BJ (cell line): ENCODE measurements at regions of chr9 and their contacts with region 1.

Region 1: DNA sequence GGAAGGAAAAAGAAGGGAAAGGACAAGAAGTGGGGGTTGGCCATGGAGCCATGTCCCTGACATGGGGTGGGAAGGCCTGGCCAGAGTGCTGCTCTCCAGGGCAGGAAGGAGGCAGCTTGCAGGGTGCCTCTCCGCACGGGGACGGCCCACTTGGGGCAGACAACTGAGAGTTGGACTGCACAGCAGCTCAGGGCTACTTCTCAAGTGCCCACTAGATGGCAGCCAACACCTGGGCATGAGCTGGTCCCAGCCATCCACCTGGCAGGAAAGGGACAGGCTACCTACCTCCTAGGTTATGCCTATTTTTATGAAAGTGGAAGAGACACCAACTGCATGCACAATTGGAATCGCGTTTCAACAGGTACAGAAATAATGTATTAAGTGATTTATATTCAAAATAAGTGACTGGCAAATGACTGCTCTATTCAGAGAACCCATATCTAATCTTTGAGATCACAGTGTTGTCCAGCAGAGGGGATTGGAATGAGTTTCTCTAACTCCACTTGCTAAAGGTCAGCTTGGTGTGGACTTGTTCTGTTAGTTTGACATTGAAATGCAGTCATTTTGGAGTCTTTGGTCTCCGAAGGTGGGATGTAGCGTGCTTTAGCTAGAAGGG is 113.4 kb downstream of the SYK start:
- DNase-seq: no peak
- H3K4me3 ChIP-seq: no peak overlapping the region
- H3K27me3 ChIP-seq: no peaks in the 10 kb centered on the region
- CTCF ChIP-seq: peak; percentile 84

Region 2: GRCh38 chr9:89929673-89930480 is 985.1 kb before region 1 on chr9:
- CTCF ChIA-PET with region 1: no interaction called
- POLR2A ChIA-PET with region 1: no interaction called
- DNase-seq: no peak
- H3K4me3 ChIP-seq: no peak overlapping the region
- H3K27me3 ChIP-seq: no peaks in the 10 kb centered on the region; the same call in 1 of the 2 replicates
- CTCF ChIP-seq: no peak

Region 3: GRCh38 chr9:90735952-90736351 is 179.0 kb before region 1 on chr9:
- CTCF ChIA-PET with region 1: no interaction called
- POLR2A ChIA-PET with region 1: no interaction called
- DNase-seq: no peak
- H3K4me3 ChIP-seq: no peak overlapping the region
- H3K27me3 ChIP-seq: no peaks in the 10 kb centered on the region
- CTCF ChIP-seq: no peak

Region 4: GRCh38 chr9:91036826-91037510 is 122.0 kb after region 1 on chr9:
- CTCF ChIA-PET with region 1: interaction called, 11 read pairs
- POLR2A ChIA-PET with region 1: no interaction called
- DNase-seq: no peak
- H3K4me3 ChIP-seq: no peak overlapping the region
- H3K27me3 ChIP-seq: no peaks in the 10 kb centered on the region
- CTCF ChIP-seq: peak; percentile 76

Region 5: GRCh38 chr9:91720751-91721705 is 806.1 kb after region 1 on chr9:
- CTCF ChIA-PET with region 1: interaction called, 51 read pairs
- POLR2A ChIA-PET with region 1: no interaction called
- DNase-seq: no peak
- H3K4me3 ChIP-seq: no peak overlapping the region
- H3K27me3 ChIP-seq: 0 out of 2 replicates have a peak, but pooled peaks cover 3% of the 10 kb centered on the region
- CTCF ChIP-seq: no peak

Region 6: DNA sequence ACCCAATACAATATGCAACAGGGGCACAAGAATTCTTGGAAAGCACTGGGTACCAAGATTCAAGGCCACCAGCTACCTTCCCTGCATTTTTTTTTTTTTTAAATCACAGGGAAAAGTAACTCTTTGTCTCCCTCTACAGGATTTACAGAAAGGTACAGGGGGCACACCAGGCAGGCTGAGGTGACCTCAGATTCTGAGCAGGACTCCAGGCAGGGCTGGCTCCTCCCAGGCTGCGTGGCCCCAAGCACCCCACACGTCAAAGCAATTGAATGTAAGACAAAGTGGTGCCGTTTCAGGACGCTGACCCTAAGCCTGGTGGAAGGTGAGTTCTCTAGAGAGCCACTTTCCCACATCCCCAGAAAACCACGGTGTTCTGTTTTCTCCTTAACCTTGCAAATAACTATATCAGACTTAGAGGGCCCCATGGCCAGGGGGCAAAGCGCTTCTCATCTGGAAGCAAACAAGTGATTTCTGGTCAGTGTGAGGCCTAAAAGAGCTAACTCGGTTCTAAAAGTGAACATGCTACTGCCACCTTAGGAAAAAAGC is 812.4 kb after region 1 on chr9:
- CTCF ChIA-PET with region 1: interaction called, 51 read pairs
- POLR2A ChIA-PET with region 1: no interaction called
- DNase-seq: no peak
- H3K4me3 ChIP-seq: no peak overlapping the region
- H3K27me3 ChIP-seq: 0 out of 2 replicates have a peak, but pooled peaks cover 1% of the 10 kb centered on the region
- CTCF ChIP-seq: peak; percentile 72